Endothelial cell of umbilical vein (primary cell): ENCODE measurements at regions of chr10 and their contacts with region 1.

Region 1: GRCh38 chr10:72273410-72274212 is at the start of gene DDIT4:
- DNase-seq: peak; percentile 99
- H3K4me3 ChIP-seq: peak within 1 kb of the TSS; percentile 37 to 68 (median 66)
- H3K27ac ChIP-seq: peak within 1 kb of the TSS; percentile 59
- H3K4me1 ChIP-seq: peaks cover 23% of the 10 kb centered on the region
- H3K27me3 ChIP-seq: no peaks in the 10 kb centered on the region
- CTCF ChIP-seq: no peak
- POLR2A ChIP-seq: peak; percentile 100
- total RNA-seq, gene DDIT4: 53.0 and 60.4 TPM in 2 replicates

Region 2: DNA sequence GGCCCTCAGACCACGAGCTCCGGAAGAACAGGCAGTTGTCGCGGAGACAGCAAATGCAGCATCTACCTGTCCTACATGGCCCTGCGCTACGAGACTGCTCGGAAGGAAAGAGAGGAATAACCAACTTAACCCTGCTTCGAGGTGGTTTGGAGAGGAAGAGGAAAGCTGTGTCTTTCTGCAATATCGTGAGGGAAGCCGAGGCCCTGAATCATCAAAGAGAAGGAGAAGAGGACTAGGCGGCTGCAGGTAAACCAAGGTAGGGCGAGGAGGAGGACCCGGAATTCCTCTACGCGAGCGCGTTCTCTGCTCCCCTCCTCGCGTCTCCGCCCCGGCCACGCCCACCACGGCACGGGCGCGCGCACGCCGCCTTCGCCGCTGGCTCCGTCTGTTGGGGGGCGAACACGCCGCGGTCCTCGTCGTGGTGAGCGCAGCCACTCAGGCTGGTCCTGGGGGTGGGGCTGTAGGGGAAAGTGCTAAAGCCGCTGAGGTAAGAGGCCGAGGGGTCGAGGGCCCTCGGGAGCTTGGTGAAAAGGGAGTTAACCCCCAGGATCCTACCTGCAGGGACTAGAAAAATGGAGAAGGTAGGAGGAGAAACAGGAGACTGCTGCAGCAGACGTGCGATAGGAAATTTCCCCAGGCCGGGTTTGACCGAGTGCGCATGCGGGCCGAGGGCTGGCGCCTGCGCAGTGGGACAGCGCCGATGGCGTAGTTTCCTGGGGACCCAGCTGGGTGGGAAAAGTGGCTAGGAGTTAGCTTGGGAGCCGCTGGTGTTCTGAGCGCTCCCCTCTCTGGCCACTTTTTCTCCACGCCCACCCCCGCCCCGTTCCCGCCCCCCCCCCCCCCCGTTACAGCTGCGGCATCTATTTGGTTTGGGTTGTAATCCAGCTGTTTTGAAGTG is 57.7 kb before region 1 on chr10 and contains the starts of genes ANAPC16 and ASCC1:
- CTCF ChIA-PET with region 1: interaction called, 9 read pairs
- POLR2A ChIA-PET with region 1: interaction called, 12 read pairs
- dilution Hi-C with region 1: no loop called
- intact Hi-C with region 1: no loop called
- DNase-seq: peak; percentile 95
- H3K4me3 ChIP-seq: peak within 1 kb of the TSS; percentile 72 to 94 (median 84)
- H3K27ac ChIP-seq: peak within 1 kb of the TSS; percentile 85
- H3K4me1 ChIP-seq: peaks cover 4% of the 10 kb centered on the region
- H3K27me3 ChIP-seq: no peaks in the 10 kb centered on the region
- CTCF ChIP-seq: no peak
- POLR2A ChIP-seq: peak; percentile 94
- total RNA-seq, gene ANAPC16: 44.2 and 44.4 TPM in 2 replicates
- total RNA-seq, gene ASCC1: 24.9 and 28.2 TPM in 2 replicates

Region 3: GRCh38 chr10:72248468-72249151 is 25.0 kb before region 1 on chr10:
- CTCF ChIA-PET with region 1: interaction called, 9 read pairs
- POLR2A ChIA-PET with region 1: interaction called, 22 read pairs
- dilution Hi-C with region 1: no loop called
- intact Hi-C with region 1: loop called (anchors 1 kb)
- DNase-seq: peak; percentile 91
- H3K4me3 ChIP-seq: no peak overlapping the region
- H3K27ac ChIP-seq: peak overlapping the region; percentile 89
- H3K4me1 ChIP-seq: peaks cover 39% of the 10 kb centered on the region
- H3K27me3 ChIP-seq: no peaks in the 10 kb centered on the region
- CTCF ChIP-seq: no peak
- POLR2A ChIP-seq: no peak

Region 4: GRCh38 chr10:72260588-72261322 is 12.9 kb before region 1 on chr10:
- CTCF ChIA-PET with region 1: interaction called, 13 read pairs
- POLR2A ChIA-PET with region 1: interaction called, 23 read pairs
- dilution Hi-C with region 1: no loop called
- intact Hi-C with region 1: loop called (anchors 1 kb)
- DNase-seq: peak; percentile 55
- H3K4me3 ChIP-seq: peak overlapping the region; percentile 61 to 78 (median 71)
- H3K27ac ChIP-seq: peak overlapping the region; percentile 26
- H3K4me1 ChIP-seq: peaks cover 17% of the 10 kb centered on the region
- H3K27me3 ChIP-seq: no peaks in the 10 kb centered on the region
- CTCF ChIP-seq: no peak
- POLR2A ChIP-seq: no peak

Region 5: GRCh38 chr10:72308320-72308987 is 34.8 kb after region 1 on chr10:
- CTCF ChIA-PET with region 1: interaction called, 6 read pairs
- POLR2A ChIA-PET with region 1: interaction called, 17 read pairs
- dilution Hi-C with region 1: no loop called
- intact Hi-C with region 1: no loop called
- DNase-seq: peak; percentile 74
- H3K4me3 ChIP-seq: no peak overlapping the region
- H3K27ac ChIP-seq: peak overlapping the region; percentile 47
- H3K4me1 ChIP-seq: peaks cover 28% of the 10 kb centered on the region
- H3K27me3 ChIP-seq: no peaks in the 10 kb centered on the region
- CTCF ChIP-seq: no peak
- POLR2A ChIP-seq: no peak

Region 6: DNA sequence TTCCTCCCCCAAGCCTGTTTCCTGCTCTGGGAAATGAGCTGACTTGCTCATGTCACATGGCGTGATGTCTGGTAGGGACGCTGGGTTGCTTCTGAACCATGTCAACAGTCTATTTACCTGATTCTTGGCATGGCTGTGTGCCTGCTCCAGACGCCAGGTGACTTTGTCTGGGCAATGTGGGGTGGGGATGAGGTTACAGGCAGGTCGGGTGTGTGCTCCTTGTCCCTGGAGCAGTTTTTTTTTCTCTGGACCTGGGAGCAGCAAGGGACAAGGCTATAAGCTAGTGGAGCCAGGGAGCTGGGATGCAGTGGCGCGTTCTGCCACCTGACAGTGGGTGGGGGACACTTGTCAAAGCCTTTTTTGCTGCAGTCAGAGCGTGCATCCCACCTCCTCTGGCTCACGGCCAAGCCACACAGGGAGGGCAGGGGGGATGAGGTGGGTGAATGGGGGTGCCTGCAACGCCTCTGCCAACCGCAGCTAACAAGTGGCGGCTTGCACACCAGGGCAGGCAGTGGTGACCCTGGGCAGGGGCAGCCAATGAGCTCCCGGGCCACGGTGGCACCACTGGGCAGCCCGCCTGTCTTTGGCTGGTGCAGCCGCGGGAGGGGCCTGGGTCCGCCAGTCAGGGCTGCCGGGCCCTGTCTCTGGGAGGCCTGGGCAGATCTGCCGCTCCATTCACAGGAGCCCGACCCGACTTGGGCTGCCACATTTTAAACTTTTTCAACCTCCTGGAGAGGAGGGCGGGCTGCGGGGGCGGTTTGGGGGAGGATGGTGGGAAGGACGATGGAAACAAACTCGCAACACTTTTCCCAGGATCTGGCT is 58.2 kb after region 1 on chr10:
- CTCF ChIA-PET with region 1: interaction called, 214 read pairs
- POLR2A ChIA-PET with region 1: interaction called, 35 read pairs
- dilution Hi-C with region 1: no loop called
- intact Hi-C with region 1: loop called (anchors 1 kb)
- DNase-seq: peak; percentile 86
- H3K4me3 ChIP-seq: no peak overlapping the region
- H3K27ac ChIP-seq: peak overlapping the region; percentile 75
- H3K4me1 ChIP-seq: peaks cover 58% of the 10 kb centered on the region
- H3K27me3 ChIP-seq: no peaks in the 10 kb centered on the region
- CTCF ChIP-seq: peak; percentile 20 to 59
- POLR2A ChIP-seq: no peak